HEK293 (cell line): ENCODE measurements at regions of chr7 and their contacts with region 1.

Region 1: GRCh38 chr7:75866489-75867389 is 12.1 kb upstream of the RHBDD2 start:
- H3K4me3 ChIP-seq: no peak overlapping the region
- H3K27ac ChIP-seq: no peak overlapping the region
- H3K4me1 ChIP-seq: no peaks in the 10 kb centered on the region
- CTCF ChIP-seq: peak; percentile 62; the same call in 1 of the 2 replicates

Region 2: GRCh38 chr7:75878769-75879611 is 12.3 kb after region 1 on chr7 and contains the start of gene RHBDD2:
- CTCF ChIA-PET with region 1: interaction called, 16 read pairs
- POLR2A ChIA-PET with region 1: no interaction called
- H3K4me3 ChIP-seq: peak within 1 kb of the TSS; percentile 67
- H3K27ac ChIP-seq: peak within 1 kb of the TSS; percentile 94
- H3K4me1 ChIP-seq: no peaks in the 10 kb centered on the region; the same call in 1 of the 2 replicates
- CTCF ChIP-seq: peak; percentile 68; the same call in 1 of the 2 replicates

Region 3: GRCh38 chr7:76185187-76185896 is 318.6 kb after region 1 on chr7:
- CTCF ChIA-PET with region 1: no interaction called
- POLR2A ChIA-PET with region 1: no interaction called
- H3K4me3 ChIP-seq: no peak overlapping the region
- H3K27ac ChIP-seq: no peak overlapping the region
- H3K4me1 ChIP-seq: no peaks in the 10 kb centered on the region
- CTCF ChIP-seq: no peak